PC-9 (cell line): ENCODE measurements at regions of chr7 and their contacts with region 1.

Region 1: DNA sequence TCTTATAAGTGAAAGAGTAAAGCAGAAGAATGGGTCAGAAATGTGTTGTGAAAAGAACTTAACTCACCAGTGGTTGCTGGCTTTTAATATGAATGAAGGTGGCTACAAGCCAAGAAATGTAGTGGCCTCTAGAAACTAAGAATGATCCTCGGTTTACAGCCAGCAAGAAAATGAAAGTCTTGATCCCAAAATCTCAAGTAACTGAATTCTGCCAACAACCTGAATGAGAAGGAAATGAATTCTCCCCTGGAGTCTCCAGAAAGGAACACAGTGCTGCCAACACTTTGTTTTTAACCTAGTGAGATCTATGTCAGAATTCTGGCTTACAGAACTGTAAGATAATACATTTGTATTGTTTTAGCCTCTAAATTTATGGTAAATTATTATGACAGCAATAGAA is 193.0 kb downstream of the FZD1 start:
- DNase-seq: no peak
- H3K4me3 ChIP-seq: no peak overlapping the region
- H3K27ac ChIP-seq: no peak overlapping the region
- H3K4me1 ChIP-seq: no peaks in the 10 kb centered on the region
- H3K27me3 ChIP-seq: no peaks in the 10 kb centered on the region
- CTCF ChIP-seq: no peak

Region 2: DNA sequence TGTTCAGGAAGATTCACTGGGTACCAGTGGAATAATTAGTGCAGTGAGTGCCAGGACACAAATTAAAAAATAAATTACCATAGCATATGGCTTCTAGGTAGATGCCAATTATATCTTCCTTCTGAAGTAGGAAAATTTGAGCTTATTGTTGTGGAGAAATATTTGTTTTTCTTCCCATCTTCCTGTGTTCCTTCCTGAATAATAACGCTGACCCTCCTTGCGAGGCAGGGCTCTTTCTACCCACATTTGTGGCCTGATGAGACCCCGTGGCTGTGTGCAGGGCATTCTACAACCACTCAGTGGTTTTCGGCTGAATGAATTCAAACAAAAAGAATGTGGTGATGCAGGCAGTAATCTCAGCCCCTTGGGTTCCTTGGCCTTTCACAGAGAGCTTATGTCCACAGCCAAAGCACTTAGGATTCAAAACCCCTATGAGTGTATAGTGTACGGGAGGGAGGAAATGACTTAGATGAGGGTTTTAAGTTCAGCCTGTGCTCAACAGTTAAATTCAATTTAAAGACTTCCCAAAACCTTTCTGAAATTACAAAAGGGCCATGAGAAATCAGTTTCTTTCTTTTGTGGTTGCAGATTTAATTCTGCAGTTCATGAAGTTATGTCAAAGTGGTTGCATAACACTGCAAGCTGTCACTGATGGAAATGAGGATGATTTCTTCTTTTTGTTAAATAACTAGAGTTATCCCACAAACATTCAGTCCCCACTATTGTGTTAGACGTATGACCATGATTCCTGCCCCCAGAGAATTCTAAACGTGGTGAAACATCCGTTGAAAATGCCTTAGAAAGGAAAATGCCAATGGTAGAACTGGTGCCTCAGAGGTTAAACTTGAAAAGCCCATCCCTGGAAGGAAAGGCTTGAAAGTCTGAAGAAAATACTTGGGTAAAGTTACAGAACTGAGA is 62.3 kb after region 1 on chr7:
- CTCF ChIA-PET with region 1: no interaction called
- POLR2A ChIA-PET with region 1: no interaction called
- intact Hi-C with region 1: loop called (anchors 10 kb)
- DNase-seq: no peak
- H3K4me3 ChIP-seq: no peak overlapping the region
- H3K27ac ChIP-seq: no peak overlapping the region
- H3K4me1 ChIP-seq: no peaks in the 10 kb centered on the region
- H3K27me3 ChIP-seq: no peaks in the 10 kb centered on the region
- CTCF ChIP-seq: no peak